Prostate gland (tissue), 2 donors: ENCODE measurements at regions of chr13 and their contacts with region 1.

Region 1: GRCh38 chr13:50123862-50124536 is 108.8 kb downstream of the KCNRG start:
- DNase-seq: peak; percentile 63
- H3K4me3 ChIP-seq: peak overlapping the region; percentile 95 to 96
- H3K27ac ChIP-seq: peak overlapping the region; percentile 99
- H3K4me1 ChIP-seq: peaks cover 5% of the 10 kb centered on the region
- H3K27me3 ChIP-seq: no peaks in the 10 kb centered on the region
- CTCF ChIP-seq: peak in 1 of 4 experiments; percentile 28
- POLR2A ChIP-seq: peak; percentile 80

Region 2: GRCh38 chr13:49996951-49997895 is 126.8 kb before region 1 on chr13 and contains the start of gene TRIM13:
- intact Hi-C with region 1: loop called (anchors 2 kb)
- DNase-seq: peak; percentile 90
- H3K4me3 ChIP-seq: peak within 1 kb of the TSS; percentile 83 to 93
- H3K27ac ChIP-seq: peak within 1 kb of the TSS; percentile 97 to 99
- H3K4me1 ChIP-seq: peaks cover 5% of the 10 kb centered on the region
- H3K27me3 ChIP-seq: no peaks in the 10 kb centered on the region
- CTCF ChIP-seq: peak; percentile 60 to 83 (median 74)
- POLR2A ChIP-seq: peak; percentile 83
- total RNA-seq, gene TRIM13: 24.4 to 52.4 TPM

Region 3: GRCh38 chr13:50911937-50912795 is 788.2 kb after region 1 on chr13:
- intact Hi-C with region 1: loop called (anchors 5 kb)
- DNase-seq: peak; percentile 78
- H3K4me3 ChIP-seq: no peak overlapping the region
- H3K27ac ChIP-seq: peak overlapping the region in 1 of 2 donors; percentile 9
- H3K4me1 ChIP-seq: no peaks in the 10 kb centered on the region
- H3K27me3 ChIP-seq: no peaks in the 10 kb centered on the region
- CTCF ChIP-seq: peak; percentile 71 to 86 (median 82)
- POLR2A ChIP-seq: no peak